ENCODE measurements at regions of chr1 and their contacts with region 1.

Region 1: GRCh38 chr1:25022361-25023189 is 92.5 kb upstream of the RUNX3 start:
- DNase-seq: peak; percentile 91
- H3K4me3 ChIP-seq: no peak overlapping the region
- H3K27ac ChIP-seq: peak overlapping the region; percentile 89
- H3K4me1 ChIP-seq: peaks cover 28% of the 10 kb centered on the region
- H3K27me3 ChIP-seq: no peaks in the 10 kb centered on the region
- CTCF ChIP-seq: no peak

Region 2: GRCh38 chr1:25054526-25055323 is 32.1 kb after region 1 on chr1:
- CTCF ChIA-PET with region 1: no interaction called
- POLR2A ChIA-PET with region 1: no interaction called
- intact Hi-C with region 1: no loop called
- DNase-seq: no peak
- H3K4me3 ChIP-seq: no peak overlapping the region
- H3K27ac ChIP-seq: no peak overlapping the region
- H3K4me1 ChIP-seq: no peaks in the 10 kb centered on the region
- H3K27me3 ChIP-seq: no peaks in the 10 kb centered on the region
- CTCF ChIP-seq: no peak

Region 3: GRCh38 chr1:25117233-25117823 is 94.8 kb after region 1 on chr1:
- CTCF ChIA-PET with region 1: no interaction called
- POLR2A ChIA-PET with region 1: interaction called, 12 read pairs
- intact Hi-C with region 1: no loop called
- DNase-seq: no peak
- H3K4me3 ChIP-seq: no peak overlapping the region
- H3K27ac ChIP-seq: no peak overlapping the region
- H3K4me1 ChIP-seq: no peaks in the 10 kb centered on the region
- H3K27me3 ChIP-seq: no peaks in the 10 kb centered on the region
- CTCF ChIP-seq: peak; percentile 35; the same call in 1 of the 2 replicates

Region 4: DNA sequence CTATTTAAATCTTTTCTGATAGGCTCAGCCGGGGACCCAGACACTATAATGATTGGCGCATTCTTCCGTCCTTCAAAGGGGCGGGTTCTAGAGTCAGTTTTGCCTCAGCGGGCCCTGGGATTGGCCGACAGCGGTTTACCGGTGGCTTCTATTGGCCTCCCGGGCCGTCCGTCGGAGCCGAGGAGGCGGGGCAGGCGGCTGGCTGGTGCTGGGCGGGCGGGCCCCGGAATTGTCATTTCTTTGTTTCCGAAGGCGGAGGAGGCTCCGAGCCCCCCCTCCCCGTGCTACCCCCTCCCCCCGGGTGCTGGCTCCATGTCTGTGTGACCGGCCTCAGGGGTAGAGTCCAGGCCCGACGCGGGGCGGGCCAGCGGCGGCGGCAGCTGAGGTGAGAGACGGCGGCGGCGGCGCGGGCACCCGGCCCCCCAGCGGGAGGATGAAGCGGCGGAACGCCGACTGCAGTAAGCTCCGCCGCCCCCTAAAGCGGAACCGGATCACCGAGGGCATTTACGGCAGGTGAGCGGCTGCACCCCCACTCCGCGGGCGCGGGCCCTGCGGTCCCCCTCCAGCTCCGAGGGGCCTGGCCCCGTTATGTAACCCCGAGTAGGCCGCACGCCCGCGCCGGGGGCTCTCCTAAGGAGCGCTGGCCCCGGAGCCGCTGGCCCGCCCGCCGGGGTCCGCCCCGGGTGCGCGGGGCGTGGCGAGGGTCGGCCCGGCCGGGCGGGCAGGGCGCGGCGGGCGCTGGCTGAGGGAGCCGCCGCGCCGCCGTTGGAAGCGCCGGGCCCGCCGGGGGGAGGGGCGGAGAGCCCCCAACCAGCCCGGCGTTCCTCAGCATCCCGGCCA is 408.3 kb after region 1 on chr1 and contains the start of gene MACO1:
- CTCF ChIA-PET with region 1: interaction called, 10 read pairs
- POLR2A ChIA-PET with region 1: no interaction called
- intact Hi-C with region 1: no loop called
- DNase-seq: peak; percentile 98
- H3K4me3 ChIP-seq: peak within 1 kb of the TSS; percentile 84
- H3K27ac ChIP-seq: peak within 1 kb of the TSS; percentile 73
- H3K4me1 ChIP-seq: peaks cover 31% of the 10 kb centered on the region
- H3K27me3 ChIP-seq: no peaks in the 10 kb centered on the region
- CTCF ChIP-seq: no peak
- total RNA-seq, gene MACO1: 20.1 and 22.9 TPM in 2 replicates